CD8-positive, alpha-beta T cell (primary cell): ENCODE measurements at regions of chr5 and their contacts with region 1.

Region 1: DNA sequence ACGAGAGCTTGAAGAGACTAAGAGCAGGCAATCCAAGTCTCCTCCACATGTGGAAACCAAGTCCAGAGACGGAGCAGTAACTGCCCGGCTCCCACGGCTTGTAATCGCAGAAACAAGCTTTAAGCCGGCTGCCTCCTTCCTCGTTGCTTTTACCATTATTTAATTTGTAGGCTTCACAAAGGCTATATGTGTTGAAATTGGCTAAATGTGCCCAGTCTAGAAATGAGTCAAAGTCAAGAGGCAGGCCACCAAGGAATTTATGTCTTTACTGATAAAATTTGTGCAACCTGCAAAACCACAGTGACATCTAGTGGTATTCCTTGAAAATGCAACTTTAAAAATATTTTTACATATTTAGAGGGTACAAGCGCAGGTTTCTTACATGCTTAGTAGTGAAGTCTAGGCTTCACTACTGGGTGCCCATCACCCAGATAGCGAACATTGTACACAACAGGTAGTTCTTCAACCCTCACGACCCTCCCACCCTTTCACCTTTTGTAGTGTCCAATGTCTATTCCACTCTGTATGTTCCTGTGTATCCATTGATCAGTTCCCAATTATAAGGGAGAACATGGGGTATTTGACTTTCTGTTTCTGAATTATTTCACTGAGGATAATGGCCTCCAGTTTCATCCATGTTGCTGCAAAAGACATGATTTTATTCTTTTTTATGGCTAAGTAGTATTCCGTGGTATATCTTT is 33.5 kb upstream of the EBF1 start:
- DNase-seq: peak in 2 of 9 experiments; percentile 52 to 61
- ATAC-seq: peak; percentile 40
- H3K4me3 ChIP-seq: no peak overlapping the region
- H3K4me3 Mint-ChIP-seq: no peak overlapping the region
- H3K27ac ChIP-seq: no peak overlapping the region
- H3K27ac Mint-ChIP-seq: no peak overlapping the region
- H3K4me1 ChIP-seq: no peaks in the 10 kb centered on the region
- H3K4me1 Mint-ChIP-seq: no peaks in the 10 kb centered on the region
- H3K27me3 ChIP-seq: no peaks in the 10 kb centered on the region
- H3K27me3 Mint-ChIP-seq: peaks cover 9% of the 10 kb centered on the region
- CTCF ChIP-seq: peak; percentile 88

Region 2: GRCh38 chr5:157761690-157762621 is 1371.2 kb before region 1 on chr5:
- CTCF ChIA-PET with region 1: no interaction called
- POLR2A ChIA-PET with region 1: no interaction called
- intact Hi-C with region 1: loop called in 1 of 2 experiments (anchors 5 kb)
- DNase-seq: peak in 3 of 9 experiments; percentile 18 to 62 (median 54)
- ATAC-seq: peak; percentile 84
- H3K4me3 ChIP-seq: no peak overlapping the region
- H3K4me3 Mint-ChIP-seq: no peak overlapping the region
- H3K27ac ChIP-seq: no peak overlapping the region
- H3K27ac Mint-ChIP-seq: no peak overlapping the region
- H3K4me1 ChIP-seq: no peaks in the 10 kb centered on the region
- H3K4me1 Mint-ChIP-seq: peaks cover 4% of the 10 kb centered on the region
- H3K27me3 ChIP-seq: no peaks in the 10 kb centered on the region
- H3K27me3 Mint-ChIP-seq: no peaks in the 10 kb centered on the region
- CTCF ChIP-seq: peak; percentile 77

Region 3: GRCh38 chr5:157820593-157821252 is 1312.5 kb before region 1 on chr5:
- CTCF ChIA-PET with region 1: interaction called, 3 read pairs
- POLR2A ChIA-PET with region 1: no interaction called
- intact Hi-C with region 1: loop called (anchors 2 kb)
- DNase-seq: peak in 3 of 9 experiments; percentile 15 to 62 (median 48)
- ATAC-seq: no peak
- H3K4me3 ChIP-seq: no peak overlapping the region
- H3K4me3 Mint-ChIP-seq: no peak overlapping the region
- H3K27ac ChIP-seq: no peak overlapping the region
- H3K27ac Mint-ChIP-seq: no peak overlapping the region
- H3K4me1 ChIP-seq: no peaks in the 10 kb centered on the region
- H3K4me1 Mint-ChIP-seq: peaks cover 34% of the 10 kb centered on the region
- H3K27me3 ChIP-seq: no peaks in the 10 kb centered on the region
- H3K27me3 Mint-ChIP-seq: no peaks in the 10 kb centered on the region
- CTCF ChIP-seq: peak; percentile 26

Region 4: DNA sequence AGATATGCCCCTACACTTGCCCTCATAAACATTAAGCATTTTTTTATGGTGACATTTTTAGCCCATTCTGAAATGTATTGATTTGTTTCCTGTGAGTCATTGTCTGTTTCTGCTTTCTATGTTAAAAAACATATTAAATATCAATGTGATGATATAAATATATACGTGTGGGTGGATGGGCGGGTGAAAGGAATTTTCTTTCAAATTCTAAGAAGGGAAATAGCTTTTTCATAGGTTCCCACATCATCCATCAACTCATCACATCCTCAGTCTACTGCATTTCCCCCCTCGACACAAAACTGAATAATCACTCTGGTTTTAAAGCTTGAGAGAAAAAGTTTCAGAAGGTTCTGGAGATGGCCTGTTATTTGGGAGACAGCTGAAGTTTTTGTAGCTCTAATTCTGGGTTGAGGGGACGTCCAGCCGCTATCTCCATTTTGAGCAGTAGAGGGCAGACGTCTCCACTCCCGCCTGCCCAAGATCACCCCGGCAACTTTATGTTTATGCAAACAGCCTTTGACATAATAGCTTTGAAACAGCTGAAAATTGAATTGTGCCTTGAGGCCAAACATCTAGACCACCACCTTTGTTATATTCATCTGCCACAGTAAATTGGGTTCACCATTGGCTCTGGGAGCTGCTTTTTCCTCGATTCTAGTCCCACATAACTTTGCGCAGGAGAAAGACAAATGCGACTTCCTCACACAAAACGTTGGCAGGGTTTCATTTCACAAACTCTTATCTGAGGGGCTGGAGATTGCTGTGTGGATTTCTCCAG is 1058.0 kb before region 1 on chr5:
- CTCF ChIA-PET with region 1: interaction called, 12 read pairs
- POLR2A ChIA-PET with region 1: no interaction called
- intact Hi-C with region 1: loop called (anchors 1 kb)
- DNase-seq: peak; percentile 7 to 66 (median 39)
- ATAC-seq: peak; percentile 64
- H3K4me3 ChIP-seq: no peak overlapping the region
- H3K4me3 Mint-ChIP-seq: no peak overlapping the region
- H3K27ac ChIP-seq: no peak overlapping the region
- H3K27ac Mint-ChIP-seq: no peak overlapping the region
- H3K4me1 ChIP-seq: no peaks in the 10 kb centered on the region
- H3K4me1 Mint-ChIP-seq: peaks cover 3% of the 10 kb centered on the region
- H3K27me3 ChIP-seq: no peaks in the 10 kb centered on the region
- H3K27me3 Mint-ChIP-seq: peaks cover 7% of the 10 kb centered on the region
- CTCF ChIP-seq: peak; percentile 54

Region 5: GRCh38 chr5:158174918-158175851 is 958.0 kb before region 1 on chr5:
- CTCF ChIA-PET with region 1: interaction called, 21 read pairs
- POLR2A ChIA-PET with region 1: no interaction called
- intact Hi-C with region 1: loop called (anchors 1 kb)
- DNase-seq: peak; percentile 10 to 66 (median 46)
- ATAC-seq: peak; percentile 44
- H3K4me3 ChIP-seq: no peak overlapping the region
- H3K4me3 Mint-ChIP-seq: no peak overlapping the region
- H3K27ac ChIP-seq: no peak overlapping the region
- H3K27ac Mint-ChIP-seq: no peak overlapping the region
- H3K4me1 ChIP-seq: no peaks in the 10 kb centered on the region
- H3K4me1 Mint-ChIP-seq: peaks cover 3% of the 10 kb centered on the region
- H3K27me3 ChIP-seq: no peaks in the 10 kb centered on the region
- H3K27me3 Mint-ChIP-seq: no peaks in the 10 kb centered on the region
- CTCF ChIP-seq: peak; percentile 56

Region 6: DNA sequence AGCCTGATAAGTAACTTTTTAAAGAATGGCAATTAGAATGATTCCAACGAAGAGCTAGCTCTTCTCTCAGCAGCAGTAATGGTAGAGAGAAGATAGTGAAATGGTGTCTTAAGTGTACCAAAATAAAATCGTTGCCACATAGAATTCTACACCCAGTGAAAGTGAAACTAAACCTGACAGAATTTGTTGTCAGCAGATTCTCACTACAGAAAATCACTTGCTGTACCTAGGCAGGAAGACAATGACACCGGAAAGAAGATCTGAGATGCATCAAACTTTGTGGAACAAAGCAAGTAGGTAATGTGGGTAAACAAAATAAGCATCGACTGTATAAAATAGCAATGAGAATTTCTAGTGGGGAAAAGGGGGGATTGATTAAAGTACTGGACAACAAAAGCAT is 12.7 kb before region 1 on chr5:
- CTCF ChIA-PET with region 1: interaction called, 19 read pairs
- POLR2A ChIA-PET with region 1: no interaction called
- intact Hi-C with region 1: no loop called
- DNase-seq: peak in 2 of 9 experiments; percentile 47 to 72
- ATAC-seq: peak; percentile 94
- H3K4me3 ChIP-seq: peak overlapping the region; percentile 31 to 37
- H3K4me3 Mint-ChIP-seq: peak overlapping the region; percentile 78
- H3K27ac ChIP-seq: peak overlapping the region; percentile 29 to 79
- H3K27ac Mint-ChIP-seq: peak overlapping the region; percentile 95
- H3K4me1 ChIP-seq: peaks cover 15% of the 10 kb centered on the region
- H3K4me1 Mint-ChIP-seq: peaks cover 22% of the 10 kb centered on the region
- H3K27me3 ChIP-seq: no peaks in the 10 kb centered on the region
- H3K27me3 Mint-ChIP-seq: no peaks in the 10 kb centered on the region
- CTCF ChIP-seq: no peak